ENCODE measurements at regions of chr6 and their contacts with region 1.

Region 1: GRCh38 chr6:35146453-35146852 is 5.3 kb upstream of the TCP11 start:
- DNase-seq: peak in 1 of 2 donors; percentile 61
- ATAC-seq: peak; percentile 88

Region 2: DNA sequence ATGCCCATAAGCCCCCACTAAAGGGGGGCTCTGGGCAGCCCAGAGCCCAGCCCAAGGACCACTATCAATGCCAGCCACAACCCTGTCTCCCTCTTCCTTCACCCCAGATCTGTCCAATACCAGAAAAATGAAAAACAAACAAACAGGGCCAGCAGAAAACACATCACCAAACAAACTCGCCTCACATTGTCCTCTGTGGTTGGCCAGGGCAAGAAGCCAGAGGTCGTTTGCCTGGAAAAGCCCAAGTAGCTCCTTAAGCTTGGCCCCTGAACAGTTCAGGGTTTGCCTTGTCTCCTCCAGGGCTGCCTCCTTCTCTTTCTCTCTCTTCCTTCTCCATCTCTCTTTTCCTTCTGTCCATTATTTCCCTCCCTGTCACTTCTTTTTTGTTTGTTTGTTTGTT is 57.2 kb after region 1 on chr6:
- intact Hi-C with region 1: loop called in 1 of 2 experiments (anchors 2 kb)
- DNase-seq: no peak
- ATAC-seq: no peak